ENCODE measurements at regions of chr2 and their contacts with region 1.

Region 1: DNA sequence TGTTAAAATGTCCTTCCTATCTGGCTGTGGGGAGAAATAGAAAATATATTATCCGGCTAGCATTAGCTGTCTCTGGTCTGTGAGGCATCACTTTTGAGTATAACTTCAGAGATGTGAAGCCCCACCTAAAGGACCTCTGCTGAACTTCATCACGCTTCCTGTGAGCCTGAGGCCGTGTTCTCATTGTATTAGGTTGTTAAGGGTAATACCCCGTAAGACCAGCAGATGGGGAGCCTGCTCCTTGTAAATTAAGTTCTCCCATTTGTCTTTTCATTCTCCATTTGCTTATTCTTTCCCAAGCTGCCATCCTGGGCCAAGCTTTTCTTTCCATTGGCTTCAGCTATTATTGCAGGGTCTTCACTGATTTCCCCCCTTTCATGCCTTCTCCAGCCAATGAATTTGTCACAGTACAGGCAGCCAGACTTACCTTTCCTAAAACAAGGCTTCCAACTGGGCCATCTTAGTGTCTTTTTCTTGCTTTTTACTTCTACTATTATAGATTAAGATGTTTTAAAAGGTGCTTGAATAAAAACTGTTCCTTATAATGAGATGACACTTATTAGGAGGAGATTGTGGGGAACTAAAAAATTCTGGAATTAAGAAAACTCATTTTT is 12.4 kb downstream of the NIF3L1 start:
- DNase-seq: peak; percentile 67
- H3K4me3 ChIP-seq: no peak overlapping the region
- H3K27ac ChIP-seq: no peak overlapping the region
- H3K4me1 ChIP-seq: no peaks in the 10 kb centered on the region
- H3K27me3 ChIP-seq: no peaks in the 10 kb centered on the region
- CTCF ChIP-seq: peak; percentile 58 to 89 (median 80)
- EP300 ChIP-seq: no peak
- POLR2A ChIP-seq: no peak

Region 2: DNA sequence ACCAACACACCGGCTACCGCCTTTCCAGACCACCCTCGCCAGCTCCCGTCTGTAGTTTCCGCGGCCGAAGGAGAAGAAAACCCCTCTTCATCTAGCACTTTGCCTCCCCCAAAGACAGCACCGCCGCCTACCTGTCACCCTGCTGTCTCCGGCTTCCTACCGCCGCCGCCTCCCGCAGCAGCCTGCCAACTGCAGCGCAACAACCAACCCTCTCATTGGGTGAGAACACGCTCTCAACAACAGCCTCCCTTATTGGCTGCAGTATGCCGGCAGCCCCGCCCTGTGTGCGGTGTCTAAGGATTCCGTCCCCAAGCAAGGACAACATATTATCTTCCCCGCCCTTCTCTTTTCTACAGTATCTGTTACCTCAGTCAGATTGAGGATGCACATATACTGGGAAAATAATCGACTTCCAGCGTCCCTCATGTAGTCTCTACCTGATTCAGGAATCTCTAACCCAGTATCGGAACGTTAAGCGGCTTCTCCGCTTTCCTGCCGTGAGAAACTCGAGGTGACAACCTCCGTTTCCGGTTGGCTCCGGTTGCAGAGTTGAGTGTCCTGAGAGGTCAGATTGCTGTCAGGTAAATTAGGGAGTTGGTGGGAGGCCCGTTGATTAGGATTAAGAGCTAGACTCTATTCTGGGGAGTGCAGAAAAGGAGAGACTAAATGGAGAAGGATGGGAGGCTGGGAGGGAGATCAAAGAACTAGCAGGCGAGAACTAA is 170.1 kb after region 1 on chr2 and contains the starts of genes HYCC2 and NDUFB3:
- in situ Hi-C with region 1: loop called (anchors 10 to 25 kb)
- intact Hi-C with region 1: no loop called
- DNase-seq: peak; percentile 94
- H3K4me3 ChIP-seq: peak within 1 kb of the TSS; percentile 77 to 89 (median 82)
- H3K27ac ChIP-seq: peak within 1 kb of the TSS; percentile 88 to 92 (median 90)
- H3K4me1 ChIP-seq: peaks cover 33 to 55% (median 39%) of the 10 kb centered on the region in 4 donors
- H3K27me3 ChIP-seq: no peaks in the 10 kb centered on the region
- CTCF ChIP-seq: peak; percentile 27 to 66 (median 40)
- EP300 ChIP-seq: peak; percentile 26
- POLR2A ChIP-seq: peak; percentile 88
- total RNA-seq, gene HYCC2: 23.9 to 104 (median 35.8) TPM
- total RNA-seq, gene NDUFB3: 2.2 to 111 (median 44.9) TPM

Region 3: GRCh38 chr2:201158111-201158929 is 256.8 kb after region 1 on chr2:
- in situ Hi-C with region 1: loop called in 1 of 4 experiments (anchors 25 kb)
- intact Hi-C with region 1: no loop called
- DNase-seq: peak; percentile 66
- H3K4me3 ChIP-seq: no peak overlapping the region
- H3K27ac ChIP-seq: peak overlapping the region; percentile 62 to 79 (median 72)
- H3K4me1 ChIP-seq: peaks cover 10 to 38% (median 17%) of the 10 kb centered on the region in 4 donors
- H3K27me3 ChIP-seq: no peaks in the 10 kb centered on the region
- CTCF ChIP-seq: peak; percentile 43 to 76 (median 58)
- EP300 ChIP-seq: no peak
- POLR2A ChIP-seq: peak; percentile 33

Region 4: GRCh38 chr2:201171259-201171814 is 269.8 kb after region 1 on chr2:
- in situ Hi-C with region 1: loop called in 3 of 4 experiments (anchors 10 to 25 kb)
- intact Hi-C with region 1: loop called (anchors 10 kb)
- DNase-seq: no peak
- H3K4me3 ChIP-seq: no peak overlapping the region
- H3K27ac ChIP-seq: no peak overlapping the region
- H3K4me1 ChIP-seq: peaks cover 3 to 15% (median 10%) of the 10 kb centered on the region in 4 donors
- H3K27me3 ChIP-seq: no peaks in the 10 kb centered on the region
- CTCF ChIP-seq: no peak
- EP300 ChIP-seq: no peak
- POLR2A ChIP-seq: no peak

Region 5: DNA sequence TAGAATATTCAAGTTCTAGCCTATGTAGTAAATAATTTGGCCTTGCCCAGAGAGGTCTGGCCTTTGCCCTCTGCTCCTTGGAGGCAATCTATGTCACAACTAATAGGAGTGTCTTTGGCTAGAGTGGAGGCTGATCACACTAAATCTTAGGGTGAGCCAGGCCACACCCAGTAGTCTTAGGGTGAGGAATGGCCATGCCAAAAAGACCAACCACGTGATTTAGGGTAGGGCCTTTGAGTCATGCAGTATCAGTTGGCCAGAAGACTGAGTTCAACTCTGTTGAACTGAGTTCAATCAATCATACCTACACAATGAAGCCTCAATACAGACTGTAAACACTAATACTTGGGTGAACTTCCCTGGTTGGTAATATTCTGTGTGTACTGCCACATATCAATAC is 481.6 kb after region 1 on chr2:
- in situ Hi-C with region 1: loop called in 1 of 4 experiments (anchors 25 kb)
- intact Hi-C with region 1: no loop called
- DNase-seq: no peak
- H3K4me3 ChIP-seq: no peak overlapping the region
- H3K27ac ChIP-seq: no peak overlapping the region
- H3K4me1 ChIP-seq: peaks cover 0 to 8% (median 2%) of the 10 kb centered on the region in 4 donors
- H3K27me3 ChIP-seq: no peaks in the 10 kb centered on the region
- CTCF ChIP-seq: no peak
- EP300 ChIP-seq: no peak
- POLR2A ChIP-seq: no peak

Measured in transverse colon (tissue), 4 donors.